IMR-90 (cell line): ENCODE measurements at regions of chr6 and their contacts with region 1.

Region 1: DNA sequence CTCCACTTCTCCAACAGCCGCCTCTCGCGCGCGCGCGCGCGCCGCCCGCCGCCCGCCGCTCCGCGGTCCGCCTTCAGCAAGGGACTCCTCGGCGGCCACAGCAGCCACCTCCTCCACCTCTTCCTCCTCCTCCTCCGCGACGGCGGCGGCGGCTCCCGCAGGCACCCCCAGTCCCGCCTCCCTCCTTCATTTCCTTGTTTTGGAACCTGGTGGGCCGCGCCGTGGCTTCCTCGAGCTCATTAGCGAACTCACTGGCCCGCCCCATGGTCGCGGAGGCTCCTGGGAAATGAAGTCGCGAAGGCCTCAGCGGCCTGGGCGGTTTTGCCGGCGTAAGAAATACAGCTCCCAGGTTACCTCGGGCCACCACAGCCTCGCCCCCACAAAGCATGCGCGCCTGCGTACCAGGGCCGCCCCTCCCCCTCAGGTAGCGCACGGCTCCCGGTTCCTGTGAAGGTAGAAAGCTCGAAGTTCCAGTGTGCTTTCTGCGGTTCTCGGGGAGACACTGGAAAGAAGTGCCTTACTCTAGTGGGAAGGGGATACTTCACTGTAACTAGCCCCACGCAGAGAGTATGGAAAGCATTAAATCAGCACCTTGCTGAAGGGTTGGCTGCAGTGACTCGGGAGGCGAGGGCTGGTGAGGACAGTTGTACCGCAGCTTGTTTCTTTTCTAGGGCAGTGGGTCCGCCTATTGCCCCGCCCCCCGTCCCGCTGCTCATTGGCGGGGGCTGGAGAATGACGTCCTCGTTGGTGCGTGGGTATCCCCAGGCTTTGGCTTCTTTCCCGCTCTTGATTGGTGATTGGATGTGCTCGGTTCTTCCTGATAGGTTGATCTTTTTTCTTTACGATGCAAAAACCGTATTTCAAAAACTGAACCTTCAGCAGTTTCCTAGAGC is at the start of gene CDK19:
- DNase-seq: peak; percentile 98
- ATAC-seq: peak; percentile 91
- H3K4me3 ChIP-seq: peak within 1 kb of the TSS; percentile 59
- H3K27ac ChIP-seq: peak within 1 kb of the TSS; percentile 89
- H3K4me1 ChIP-seq: no peaks in the 10 kb centered on the region; the same call in 1 of the 2 replicates
- H3K27me3 ChIP-seq: no peaks in the 10 kb centered on the region
- CTCF ChIP-seq: no peak
- POLR2A ChIP-seq: peak; percentile 86
- RAD21 ChIP-seq: 0 out of 2 replicates have a peak, but pooled peaks have one; percentile 2
- total RNA-seq, gene CDK19: 6.8 and 7.5 TPM in 2 replicates

Region 2: DNA sequence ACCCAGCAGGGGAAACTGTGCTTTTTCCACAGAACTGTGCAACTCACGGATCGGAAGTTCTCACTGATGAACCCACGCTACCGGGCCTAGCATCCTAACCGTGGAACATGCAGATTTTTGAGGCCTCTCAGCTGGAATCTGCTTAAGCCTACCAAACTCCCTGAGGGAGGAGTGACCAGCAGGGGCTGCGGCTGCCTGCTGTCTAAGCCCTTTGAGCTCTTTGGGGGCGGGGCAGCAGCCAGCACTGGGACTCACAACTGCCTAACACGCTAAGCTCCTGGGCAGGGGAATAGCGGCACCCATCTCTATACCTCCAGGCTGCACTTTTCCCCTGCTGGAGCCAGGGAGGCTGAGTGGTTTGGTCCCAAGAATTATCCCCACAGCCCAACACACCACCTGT is 436.9 kb before region 1 on chr6:
- CTCF ChIA-PET with region 1: no interaction called
- POLR2A ChIA-PET with region 1: no interaction called
- dilution Hi-C with region 1: no loop called
- in situ Hi-C with region 1: no loop called
- intact Hi-C with region 1: no loop called
- DNase-seq: no peak
- ATAC-seq: no peak
- H3K4me3 ChIP-seq: no peak overlapping the region
- H3K27ac ChIP-seq: no peak overlapping the region
- H3K4me1 ChIP-seq: no peaks in the 10 kb centered on the region
- H3K27me3 ChIP-seq: no peaks in the 10 kb centered on the region; the same call in 1 of the 2 replicates
- CTCF ChIP-seq: no peak
- POLR2A ChIP-seq: no peak
- RAD21 ChIP-seq: no peak

Region 3: GRCh38 chr6:110826236-110827129 is 11.0 kb after region 1 on chr6:
- CTCF ChIA-PET with region 1: interaction called, 11 read pairs
- POLR2A ChIA-PET with region 1: no interaction called
- dilution Hi-C with region 1: no loop called
- in situ Hi-C with region 1: no loop called
- intact Hi-C with region 1: no loop called
- DNase-seq: peak; percentile 22
- ATAC-seq: no peak; the same call in 1 of the 2 replicates
- H3K4me3 ChIP-seq: no peak overlapping the region
- H3K27ac ChIP-seq: no peak overlapping the region
- H3K4me1 ChIP-seq: peaks cover 4% of the 10 kb centered on the region
- H3K27me3 ChIP-seq: no peaks in the 10 kb centered on the region
- CTCF ChIP-seq: no peak
- POLR2A ChIP-seq: no peak
- RAD21 ChIP-seq: no peak

Region 4: DNA sequence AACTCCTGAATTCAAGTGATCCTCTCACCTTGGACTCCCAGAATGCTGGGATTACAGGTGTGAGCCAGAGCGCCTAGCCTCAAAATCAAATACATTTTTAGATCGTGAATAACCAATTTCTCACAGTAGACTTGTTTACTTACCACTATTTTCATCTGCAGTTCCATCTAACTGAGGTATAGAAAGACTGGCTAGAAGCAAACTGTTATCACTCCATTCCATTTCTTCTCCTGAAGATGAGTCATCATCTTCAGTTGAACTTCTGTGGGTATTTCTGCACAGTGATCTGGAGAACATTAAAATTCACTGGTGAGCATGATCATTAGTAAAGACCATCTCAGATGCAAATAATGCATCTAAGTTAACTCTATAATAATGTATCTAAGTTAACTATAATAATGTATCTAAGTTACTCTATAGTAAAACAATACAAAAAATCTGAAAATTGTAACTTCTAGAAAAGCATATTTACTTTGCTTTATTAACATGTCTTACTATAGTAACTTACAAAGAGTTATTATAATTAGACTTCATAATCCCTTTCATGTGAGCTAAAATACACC is 562.2 kb after region 1 on chr6:
- CTCF ChIA-PET with region 1: no interaction called
- POLR2A ChIA-PET with region 1: no interaction called
- dilution Hi-C with region 1: no loop called
- in situ Hi-C with region 1: no loop called
- intact Hi-C with region 1: no loop called
- DNase-seq: peak; percentile 47
- ATAC-seq: peak; percentile 60; the same call in 1 of the 2 replicates
- H3K4me3 ChIP-seq: no peak overlapping the region
- H3K27ac ChIP-seq: no peak overlapping the region
- H3K4me1 ChIP-seq: no peaks in the 10 kb centered on the region; the same call in 1 of the 2 replicates
- H3K27me3 ChIP-seq: no peaks in the 10 kb centered on the region
- CTCF ChIP-seq: no peak
- POLR2A ChIP-seq: no peak
- RAD21 ChIP-seq: no peak